H1 (cell line): ENCODE measurements at regions of chr3 and their contacts with region 1.

Region 1: GRCh38 chr3:160929595-160929994 is 173.6 kb downstream of the PPM1L start:
- DNase-seq: no peak
- H3K4me3 ChIP-seq: no peak overlapping the region
- H3K27ac ChIP-seq: no peak overlapping the region
- H3K4me1 ChIP-seq: no peaks in the 10 kb centered on the region
- H3K27me3 ChIP-seq: no peaks in the 10 kb centered on the region
- CTCF ChIP-seq: peak; percentile 15 to 36 (median 27); a peak in 2 of 4 replicates
- EP300 ChIP-seq: no peak
- POLR2A ChIP-seq: no peak
- RAD21 ChIP-seq: peak in 1 of 2 experiments; percentile 16; a peak in 2 of 4 replicates

Region 2: DNA sequence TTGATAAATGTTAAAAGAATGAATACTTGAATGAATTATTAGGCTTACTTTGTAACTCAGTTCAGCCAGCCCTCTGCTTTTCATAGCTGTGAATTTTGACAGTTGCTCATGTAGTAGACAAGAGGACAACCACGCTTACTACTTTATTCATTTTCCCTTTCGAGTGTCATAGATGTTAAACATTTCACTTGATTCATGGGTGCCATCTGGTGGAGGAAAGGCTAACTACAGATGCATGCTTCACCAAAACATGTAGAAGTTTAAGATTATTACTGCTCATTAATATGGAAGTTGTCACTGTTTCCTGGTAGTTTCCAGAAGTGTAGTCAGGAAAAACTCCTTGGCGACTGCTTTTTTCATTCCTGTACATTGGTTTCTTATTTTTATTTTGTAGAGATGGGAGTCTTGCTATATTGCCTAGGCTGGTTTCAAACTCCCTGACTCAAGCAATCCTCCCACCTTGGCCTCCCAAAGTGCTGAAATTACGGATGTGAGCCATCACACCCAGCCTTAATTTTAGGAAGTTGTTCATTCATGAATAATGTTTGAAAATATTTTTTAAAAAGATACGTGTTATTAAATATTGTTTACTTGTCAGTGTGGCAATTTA is 12.4 kb after region 1 on chr3:
- CTCF ChIA-PET with region 1: interaction called, 47 read pairs
- POLR2A ChIA-PET with region 1: no interaction called
- DNase-seq: peak in 1 of 2 experiments; percentile 83
- H3K4me3 ChIP-seq: no peak overlapping the region
- H3K27ac ChIP-seq: no peak overlapping the region
- H3K4me1 ChIP-seq: no peaks in the 10 kb centered on the region
- H3K27me3 ChIP-seq: no peaks in the 10 kb centered on the region
- CTCF ChIP-seq: peak in 2 of 3 experiments; percentile 52 to 77; a peak in 2 of 4 replicates
- EP300 ChIP-seq: no peak
- POLR2A ChIP-seq: no peak
- RAD21 ChIP-seq: peak; percentile 83